HEK293 (cell line): ENCODE measurements at regions of chr16 and their contacts with region 1.

Region 1: DNA sequence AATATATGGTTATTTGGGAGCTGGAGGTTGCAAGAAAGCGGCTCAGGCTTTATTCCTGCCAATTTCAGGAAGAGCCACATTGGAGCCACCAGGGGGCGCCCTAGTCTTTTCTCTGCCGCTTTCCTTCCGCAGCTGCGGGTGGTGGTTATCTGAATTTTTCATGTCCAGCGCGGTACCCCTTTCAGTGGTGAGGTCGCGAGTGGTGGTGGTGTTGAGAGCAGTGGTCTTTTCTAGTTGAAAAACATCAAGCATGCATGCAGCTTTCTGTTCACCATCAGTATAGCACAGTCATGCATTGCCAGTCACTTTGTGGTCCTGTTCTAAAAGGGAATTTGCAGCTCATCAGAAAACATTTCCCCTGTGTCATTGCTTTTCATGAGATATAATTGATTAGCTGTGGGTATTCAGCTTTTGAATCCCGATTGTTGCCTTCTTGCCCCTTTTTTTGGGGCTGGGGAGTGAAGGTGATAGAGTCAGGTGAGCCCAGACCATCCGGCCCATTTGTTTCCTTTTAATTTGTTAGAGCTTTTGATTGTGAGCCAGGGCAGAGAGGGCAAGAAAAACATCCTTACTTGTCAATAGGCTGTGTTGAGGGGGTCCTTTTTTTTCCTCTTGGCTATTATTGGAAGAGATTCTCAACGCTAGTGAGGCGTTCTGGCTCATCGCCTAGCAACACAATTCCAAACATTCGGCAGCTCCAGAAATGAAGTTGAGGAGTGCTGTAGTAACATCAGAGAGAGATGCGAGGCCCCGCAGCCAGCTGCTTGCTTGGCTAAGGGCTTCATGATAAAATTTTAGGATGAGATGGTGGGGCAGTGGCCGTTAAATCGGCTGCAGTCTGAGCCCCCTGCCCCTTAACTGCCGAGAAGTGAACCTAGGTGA is 119.0 kb downstream of the SNX29 start:
- H3K4me3 ChIP-seq: no peak overlapping the region
- H3K27ac ChIP-seq: no peak overlapping the region
- H3K4me1 ChIP-seq: peaks cover 3% of the 10 kb centered on the region
- CTCF ChIP-seq: peak; percentile 50

Region 2: GRCh38 chr16:12026741-12027490 is 68.6 kb before region 1 on chr16:
- CTCF ChIA-PET with region 1: no interaction called
- POLR2A ChIA-PET with region 1: no interaction called
- H3K4me3 ChIP-seq: no peak overlapping the region
- H3K27ac ChIP-seq: no peak overlapping the region
- H3K4me1 ChIP-seq: no peaks in the 10 kb centered on the region
- CTCF ChIP-seq: no peak

Region 3: DNA sequence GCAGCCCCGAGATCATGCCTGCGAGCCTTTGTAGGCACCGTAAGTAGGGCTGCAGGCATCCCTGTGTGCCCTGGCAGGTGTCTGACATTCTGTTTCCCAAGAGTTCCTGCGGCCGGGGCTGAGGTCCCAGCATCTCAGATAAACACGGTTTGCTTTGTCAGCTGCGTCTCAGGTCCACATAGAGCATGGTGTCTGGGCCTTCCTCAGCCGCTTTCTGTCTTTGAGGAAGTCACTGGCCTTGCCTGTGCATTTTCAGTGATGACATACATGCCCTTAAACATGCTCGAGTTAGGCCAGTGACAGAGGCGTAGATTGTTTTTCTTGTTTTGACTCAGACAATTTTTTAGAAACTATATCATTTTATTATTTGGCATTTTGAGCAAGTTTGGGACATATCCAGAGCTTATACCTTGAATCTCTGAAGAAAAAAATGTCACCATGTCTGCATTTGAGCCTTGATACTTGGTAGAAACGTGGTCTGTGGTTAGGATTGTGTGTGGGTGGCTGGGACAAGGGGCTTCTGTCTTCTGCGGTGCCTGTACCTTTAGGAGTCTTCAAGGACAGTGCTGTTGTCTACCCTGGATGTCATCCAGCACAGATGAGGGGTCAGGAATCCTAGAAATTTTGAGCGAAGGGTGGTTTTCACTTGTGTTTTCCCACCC is 13.2 kb before region 1 on chr16:
- CTCF ChIA-PET with region 1: interaction called, 21 read pairs
- POLR2A ChIA-PET with region 1: no interaction called
- H3K4me3 ChIP-seq: no peak overlapping the region
- H3K27ac ChIP-seq: no peak overlapping the region
- H3K4me1 ChIP-seq: no peaks in the 10 kb centered on the region
- CTCF ChIP-seq: no peak

Region 4: DNA sequence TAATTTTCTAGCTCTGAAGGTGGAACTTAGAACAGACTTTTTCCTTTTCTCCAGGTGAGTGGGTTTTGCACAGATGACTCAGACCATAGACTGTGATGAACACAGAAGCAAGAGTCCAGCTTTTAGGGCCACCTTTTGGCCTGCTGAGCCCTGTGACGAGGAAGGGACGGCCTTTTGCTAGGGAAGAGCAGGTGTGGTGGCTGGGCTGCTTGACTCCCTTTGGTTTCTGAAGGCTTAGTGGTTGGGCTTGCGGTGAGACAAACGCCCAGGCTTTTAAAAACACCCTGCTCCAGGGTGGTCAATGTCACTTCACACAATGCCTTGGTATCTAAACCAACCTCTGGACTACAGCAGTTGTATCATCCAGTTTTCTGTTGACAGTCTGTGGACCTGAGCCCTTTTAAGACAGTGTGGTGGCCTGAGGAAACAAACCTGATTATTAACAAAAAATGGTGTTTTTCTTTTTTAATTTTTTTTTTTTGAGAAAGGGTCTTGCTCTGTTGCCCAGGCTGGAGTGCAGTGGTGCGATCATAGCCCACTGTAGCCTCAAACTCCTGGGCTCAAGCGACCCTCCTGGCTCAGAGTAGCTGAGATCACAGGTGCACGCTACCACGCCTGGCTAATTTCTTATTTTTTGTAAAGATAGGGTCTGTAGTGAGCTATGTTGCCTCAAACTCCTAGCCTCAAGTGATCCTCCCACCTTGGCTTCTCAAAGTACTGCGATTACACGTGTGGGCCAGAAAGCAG is 15.0 kb after region 1 on chr16:
- CTCF ChIA-PET with region 1: interaction called, 30 read pairs
- POLR2A ChIA-PET with region 1: no interaction called
- H3K4me3 ChIP-seq: no peak overlapping the region
- H3K27ac ChIP-seq: no peak overlapping the region
- H3K4me1 ChIP-seq: no peaks in the 10 kb centered on the region
- CTCF ChIP-seq: no peak

Region 5: GRCh38 chr16:12132290-12132689 is 36.8 kb after region 1 on chr16:
- CTCF ChIA-PET with region 1: interaction called, 12 read pairs
- POLR2A ChIA-PET with region 1: no interaction called
- H3K4me3 ChIP-seq: no peak overlapping the region
- H3K27ac ChIP-seq: no peak overlapping the region
- H3K4me1 ChIP-seq: no peaks in the 10 kb centered on the region
- CTCF ChIP-seq: no peak

Region 6: GRCh38 chr16:12228602-12229499 is 133.3 kb after region 1 on chr16:
- CTCF ChIA-PET with region 1: interaction called, 32 read pairs
- POLR2A ChIA-PET with region 1: no interaction called
- H3K4me3 ChIP-seq: no peak overlapping the region
- H3K27ac ChIP-seq: no peak overlapping the region
- H3K4me1 ChIP-seq: peaks cover 5% of the 10 kb centered on the region; the same call in 1 of the 2 replicates
- CTCF ChIP-seq: peak; percentile 56; the same call in 1 of the 2 replicates

Region 7: DNA sequence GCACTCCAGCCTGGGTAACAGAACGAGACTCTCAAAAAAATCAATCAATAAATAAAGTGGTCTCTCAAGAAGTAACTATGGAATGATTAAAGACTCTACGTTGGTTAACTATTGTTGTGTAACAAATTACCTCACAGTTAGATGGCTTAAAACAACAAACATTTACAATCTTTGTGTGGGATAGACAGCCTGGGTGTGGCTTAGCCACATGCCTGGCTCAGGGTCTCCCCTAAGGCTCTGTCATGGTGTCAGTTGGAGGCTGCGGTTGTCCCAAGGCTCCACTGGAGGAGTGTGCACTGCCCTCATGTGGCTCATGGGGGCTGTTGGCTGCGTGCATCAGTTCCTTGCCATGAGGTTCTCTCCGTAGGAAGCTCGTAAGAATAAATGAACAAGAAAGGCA is 175.5 kb after region 1 on chr16:
- CTCF ChIA-PET with region 1: interaction called, 74 read pairs
- POLR2A ChIA-PET with region 1: no interaction called
- H3K4me3 ChIP-seq: no peak overlapping the region
- H3K27ac ChIP-seq: no peak overlapping the region
- H3K4me1 ChIP-seq: no peaks in the 10 kb centered on the region
- CTCF ChIP-seq: peak; percentile 54; the same call in 1 of the 2 replicates